ENCODE measurements at regions of chr6 and their contacts with region 1.

Region 1: GRCh38 chr6:108541838-108542759 is 18.6 kb upstream of the FOXO3 start:
- DNase-seq: peak; percentile 61 to 90 (median 73)
- H3K4me3 ChIP-seq: no peak overlapping the region
- H3K27ac ChIP-seq: no peak overlapping the region
- H3K4me1 ChIP-seq: no peaks in the 10 kb centered on the region
- H3K27me3 ChIP-seq: no peaks in the 10 kb centered on the region
- CTCF ChIP-seq: peak; percentile 73 to 97 (median 91)
- POLR2A ChIP-seq: no peak

Region 2: DNA sequence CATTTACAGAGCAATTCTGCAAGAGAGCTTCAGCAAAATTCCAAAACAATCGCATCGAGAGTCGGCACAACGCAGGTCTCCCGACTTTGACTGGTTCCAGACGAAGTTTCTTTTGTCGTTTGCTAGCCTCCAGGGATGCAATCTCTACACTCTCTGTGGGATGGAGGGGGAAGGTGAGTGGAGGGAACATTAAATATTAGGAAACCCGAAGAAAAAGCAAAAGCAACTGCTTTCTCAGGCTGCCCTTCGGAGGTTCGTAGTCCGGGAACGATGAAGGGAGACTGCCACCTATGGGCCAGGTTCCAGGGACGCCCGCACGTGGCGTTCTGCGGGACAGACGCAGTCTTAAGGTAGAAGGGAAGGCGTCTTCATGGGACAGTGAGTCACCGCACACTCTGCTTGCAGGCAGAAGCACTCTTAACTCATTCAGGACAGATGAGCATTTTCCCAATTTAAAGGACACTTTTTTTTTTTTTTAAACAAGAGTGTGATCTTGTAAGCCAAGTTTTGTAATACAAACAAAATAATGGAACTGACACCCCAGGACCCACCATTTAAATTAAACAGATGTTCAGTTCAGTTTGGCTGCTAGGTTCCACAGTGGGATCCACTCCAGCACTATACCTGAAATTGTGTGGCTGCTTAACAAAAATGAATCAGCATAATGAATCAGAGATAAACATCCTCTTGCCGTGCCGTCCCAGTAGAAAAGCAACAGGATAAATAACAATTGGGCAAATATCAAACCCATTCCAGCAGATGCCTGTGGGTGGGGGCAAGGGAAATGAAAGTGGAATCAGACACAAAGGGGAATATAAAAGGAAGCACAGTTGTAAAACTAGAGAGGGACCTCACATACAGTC is 240.3 kb after region 1 on chr6:
- intact Hi-C with region 1: loop called in 1 of 2 experiments (anchors 10 kb)
- DNase-seq: peak; percentile 80 to 93 (median 84)
- H3K4me3 ChIP-seq: peak overlapping the region in 3 of 4 donors; percentile 8 to 60 (median 17)
- H3K27ac ChIP-seq: peak overlapping the region in 2 of 5 donors; percentile 9 to 40
- H3K4me1 ChIP-seq: peaks cover 5 to 19% of the 10 kb centered on the region in 2 donors
- H3K27me3 ChIP-seq: peaks cover 7% of the 10 kb centered on the region
- CTCF ChIP-seq: peak; percentile 42 to 79 (median 72)
- POLR2A ChIP-seq: no peak

Region 3: DNA sequence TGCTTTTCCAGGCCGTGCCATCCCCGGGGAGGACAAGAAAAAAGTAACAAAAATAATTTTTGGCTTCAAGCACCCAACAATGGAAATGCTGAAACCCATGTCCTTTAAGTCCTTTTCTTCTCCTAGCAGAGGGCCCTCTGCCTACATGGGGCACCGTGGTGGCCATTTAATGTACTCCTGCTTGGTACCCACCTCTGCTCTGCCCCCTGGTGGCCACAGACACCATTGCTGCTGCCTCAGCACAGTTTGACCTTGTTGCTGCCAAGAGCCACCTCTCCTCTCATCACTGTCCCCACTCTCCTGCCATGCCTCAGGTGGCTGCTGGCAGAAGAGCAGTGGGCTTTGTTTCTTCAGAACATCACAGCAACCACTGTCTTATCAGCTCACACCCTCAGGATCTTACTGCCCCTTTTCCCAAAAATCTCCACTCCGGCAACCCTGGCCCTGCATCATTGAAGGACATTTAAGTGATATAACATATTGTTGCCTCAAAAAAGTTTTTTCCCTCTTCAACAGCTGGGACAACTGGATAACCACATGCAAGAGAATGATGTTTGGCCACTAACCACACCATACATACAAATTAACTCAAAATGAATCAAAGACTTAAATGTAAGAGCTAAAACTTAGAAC is 293.2 kb after region 1 on chr6:
- intact Hi-C with region 1: loop called (anchors 2 to 5 kb)
- DNase-seq: peak; percentile 81 to 96 (median 90)
- H3K4me3 ChIP-seq: no peak overlapping the region
- H3K27ac ChIP-seq: no peak overlapping the region
- H3K4me1 ChIP-seq: peaks cover 0 to 4% of the 10 kb centered on the region in 2 donors
- H3K27me3 ChIP-seq: no peaks in the 10 kb centered on the region
- CTCF ChIP-seq: peak; percentile 94 to 99 (median 98)
- POLR2A ChIP-seq: no peak

Region 4: DNA sequence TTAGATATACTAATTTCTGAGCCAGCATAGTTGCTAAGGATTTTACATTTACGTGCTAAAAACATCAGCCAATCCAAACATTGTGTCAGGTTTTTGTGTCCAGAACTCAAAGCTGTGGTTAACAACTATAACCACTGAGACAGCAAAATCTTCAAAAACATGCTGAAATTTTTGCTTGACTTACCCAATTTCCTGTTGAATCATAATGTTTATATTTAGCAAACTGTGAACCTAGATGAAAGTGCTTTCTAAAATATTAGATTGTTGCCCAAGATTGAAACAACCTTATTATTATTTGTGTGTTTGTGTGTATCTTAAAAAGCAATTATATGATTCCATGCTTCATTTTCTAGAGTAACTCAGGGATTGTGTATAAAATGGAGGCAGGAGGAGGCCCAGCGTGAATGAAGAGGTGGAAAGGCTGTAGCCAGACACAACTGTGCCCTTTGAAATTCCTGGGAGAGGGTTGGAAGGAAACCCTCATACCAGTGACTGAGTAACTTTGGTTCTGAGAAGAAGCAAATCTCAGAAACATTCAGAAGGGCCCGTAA is 354.1 kb after region 1 on chr6:
- intact Hi-C with region 1: loop called (anchors 5 kb)
- DNase-seq: no peak
- H3K4me3 ChIP-seq: no peak overlapping the region
- H3K27ac ChIP-seq: peak overlapping the region in 3 of 5 donors; percentile 32 to 79 (median 67)
- H3K4me1 ChIP-seq: peaks cover 8 to 35% of the 10 kb centered on the region in 2 donors
- H3K27me3 ChIP-seq: no peaks in the 10 kb centered on the region
- CTCF ChIP-seq: no peak
- POLR2A ChIP-seq: no peak

Region 5: DNA sequence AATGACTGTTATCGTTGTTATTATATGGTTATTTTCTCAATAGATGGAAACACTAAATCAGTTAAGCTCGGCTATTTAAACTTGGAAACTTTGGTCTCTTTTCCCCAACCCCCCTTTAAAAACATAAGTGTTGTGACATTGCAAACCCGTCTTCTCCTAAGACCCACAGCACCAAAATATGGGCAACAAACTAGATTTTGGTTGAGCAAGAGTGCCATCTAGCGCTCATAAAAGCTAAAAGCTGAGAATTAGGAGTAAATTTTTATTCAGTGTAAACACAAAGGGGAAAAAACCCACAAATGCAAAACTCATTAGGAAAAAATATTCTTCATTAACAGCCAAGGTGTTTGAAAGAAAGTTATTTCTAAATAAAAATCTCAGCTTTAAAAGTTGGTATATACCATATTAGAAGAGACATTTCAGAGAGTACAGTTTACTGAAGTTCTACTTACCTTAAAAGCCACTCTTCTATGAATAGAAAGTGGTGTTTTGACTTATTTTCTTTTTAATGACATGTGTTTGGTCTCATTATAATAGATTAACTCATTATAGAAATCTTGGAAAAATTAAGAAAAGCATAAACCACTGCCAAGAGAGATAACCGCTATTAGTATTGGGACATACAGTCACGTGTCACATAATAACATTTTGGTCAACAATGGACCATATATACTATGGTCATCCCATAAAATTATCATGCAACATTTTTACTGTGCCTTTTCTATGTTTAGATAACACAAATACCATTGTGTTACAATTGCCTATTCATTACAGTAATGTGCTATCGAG is 531.4 kb after region 1 on chr6:
- intact Hi-C with region 1: loop called in 1 of 2 experiments (anchors 10 kb)
- DNase-seq: peak in 5 of 7 donors; percentile 38 to 60 (median 55)
- H3K4me3 ChIP-seq: no peak overlapping the region
- H3K27ac ChIP-seq: no peak overlapping the region
- H3K4me1 ChIP-seq: peaks cover 0 to 34% of the 10 kb centered on the region in 2 donors
- H3K27me3 ChIP-seq: no peaks in the 10 kb centered on the region
- CTCF ChIP-seq: peak; percentile 50 to 84 (median 72)
- POLR2A ChIP-seq: no peak